H1 (cell line): ENCODE measurements at regions of chr15 and their contacts with region 1.

Region 1: DNA sequence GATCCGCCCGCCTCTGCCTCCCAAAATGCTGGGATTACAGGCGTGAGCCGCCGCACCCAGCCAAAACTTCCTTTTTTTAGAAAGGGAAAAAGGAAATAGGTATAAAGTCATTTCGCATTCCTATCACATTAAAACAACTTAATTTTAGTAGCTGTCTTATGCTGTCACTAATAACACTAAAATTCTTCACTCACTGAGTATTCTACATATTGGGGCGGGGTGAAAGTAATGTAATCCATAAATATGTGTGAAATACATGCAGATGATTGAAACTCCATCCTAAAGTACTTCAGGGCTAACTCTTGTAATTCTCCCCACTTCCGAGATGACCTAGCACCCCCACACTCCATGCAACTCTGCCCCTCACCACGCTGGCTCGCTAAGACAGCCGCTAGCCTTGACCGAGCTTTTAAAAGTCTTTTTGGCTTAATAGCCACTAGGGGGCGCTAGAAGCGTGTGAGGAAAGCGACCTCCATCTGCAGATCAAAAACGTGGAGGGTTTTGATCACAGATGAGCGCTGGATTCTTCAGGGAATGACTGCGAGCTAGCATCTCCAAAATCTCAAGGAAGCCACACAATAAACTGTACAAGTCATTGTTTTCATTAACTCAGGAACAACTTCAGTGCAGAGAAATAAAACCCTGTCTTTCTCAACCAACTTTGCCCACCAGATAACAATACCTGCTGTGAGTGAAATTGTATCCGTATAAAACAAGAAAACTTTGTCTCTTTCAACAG is 129.3 kb upstream of the IGF1R start:
- DNase-seq: peak; percentile 17 to 62
- H3K4me3 ChIP-seq: no peak overlapping the region
- H3K27ac ChIP-seq: no peak overlapping the region
- H3K4me1 ChIP-seq: no peaks in the 10 kb centered on the region; a peak in 1 of 7 replicates
- H3K27me3 ChIP-seq: no peaks in the 10 kb centered on the region
- CTCF ChIP-seq: peak; percentile 47 to 88 (median 81)
- EP300 ChIP-seq: no peak
- POLR2A ChIP-seq: no peak
- RAD21 ChIP-seq: peak; percentile 90 to 94

Region 2: GRCh38 chr15:98568382-98569017 is 49.5 kb after region 1 on chr15:
- CTCF ChIA-PET with region 1: interaction called, 13 read pairs
- POLR2A ChIA-PET with region 1: interaction called, 3 read pairs
- DNase-seq: no peak
- H3K4me3 ChIP-seq: no peak overlapping the region
- H3K27ac ChIP-seq: no peak overlapping the region
- H3K4me1 ChIP-seq: no peaks in the 10 kb centered on the region
- H3K27me3 ChIP-seq: no peaks in the 10 kb centered on the region
- CTCF ChIP-seq: peak in 1 of 3 experiments; percentile 17; a peak in 1 of 4 replicates
- EP300 ChIP-seq: no peak
- POLR2A ChIP-seq: no peak
- RAD21 ChIP-seq: no peak

Region 3: DNA sequence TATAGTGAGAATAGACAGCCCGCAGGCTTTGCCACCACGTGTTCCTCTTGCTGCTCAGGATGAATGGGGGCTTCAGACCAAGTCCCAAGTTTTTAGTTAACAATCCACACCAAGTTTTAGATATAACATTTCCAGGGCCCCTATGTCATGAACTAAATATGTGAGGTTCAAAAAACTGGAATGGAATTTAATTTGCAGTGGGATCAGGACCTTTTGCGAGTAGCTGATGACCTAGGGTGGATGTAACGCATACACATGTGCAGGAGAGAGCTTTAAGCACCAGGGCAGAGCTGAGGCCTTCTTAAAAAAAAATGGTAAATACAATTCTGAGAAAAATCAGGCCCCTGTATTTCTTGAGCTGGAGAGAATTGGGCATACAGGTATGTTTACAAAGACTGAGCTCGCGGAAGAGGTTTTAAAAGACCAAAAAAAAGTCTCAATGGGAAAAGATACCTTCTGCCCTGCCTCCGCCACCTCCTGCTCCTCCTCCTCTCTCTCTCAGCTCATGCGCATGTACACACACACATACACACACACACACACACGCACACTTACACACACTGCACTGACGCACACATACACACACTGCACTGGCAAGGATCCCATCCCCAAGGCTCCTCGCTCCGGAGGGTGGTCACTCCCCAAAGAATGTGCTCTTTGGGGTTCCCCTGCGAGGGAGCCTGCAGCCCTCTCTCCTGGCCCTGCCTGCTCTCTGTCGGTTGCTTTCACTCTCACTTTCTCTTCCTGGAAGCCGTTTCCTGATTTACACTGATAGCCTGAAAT is 81.1 kb after region 1 on chr15:
- CTCF ChIA-PET with region 1: interaction called, 35 read pairs
- POLR2A ChIA-PET with region 1: no interaction called
- DNase-seq: peak in 1 of 2 experiments; percentile 52
- H3K4me3 ChIP-seq: peak overlapping the region in 1 of 4 experiments; percentile 36; a peak in 1 of 8 replicates
- H3K27ac ChIP-seq: no peak overlapping the region
- H3K4me1 ChIP-seq: peaks cover 0 to 14% (median 8%) of the 10 kb centered on the region in 4 experiments; a peak in 5 of 7 replicates
- H3K27me3 ChIP-seq: no peaks in the 10 kb centered on the region
- CTCF ChIP-seq: no peak
- EP300 ChIP-seq: no peak
- POLR2A ChIP-seq: no peak
- RAD21 ChIP-seq: no peak; a peak in 1 of 4 replicates

Region 4: GRCh38 chr15:98658831-98659699 is 140.1 kb after region 1 on chr15:
- CTCF ChIA-PET with region 1: interaction called, 124 read pairs
- POLR2A ChIA-PET with region 1: interaction called, 3 read pairs
- DNase-seq: peak in 1 of 2 experiments; percentile 46
- H3K4me3 ChIP-seq: no peak overlapping the region
- H3K27ac ChIP-seq: no peak overlapping the region
- H3K4me1 ChIP-seq: peaks cover 8 to 31% (median 24%) of the 10 kb centered on the region in 4 experiments
- H3K27me3 ChIP-seq: no peaks in the 10 kb centered on the region
- CTCF ChIP-seq: peak; percentile 42 to 86 (median 72)
- EP300 ChIP-seq: no peak
- POLR2A ChIP-seq: no peak
- RAD21 ChIP-seq: peak; percentile 73 to 80

Region 5: GRCh38 chr15:98904544-98904943 is 385.6 kb after region 1 on chr15:
- CTCF ChIA-PET with region 1: interaction called, 11 read pairs
- POLR2A ChIA-PET with region 1: no interaction called
- DNase-seq: no peak
- H3K4me3 ChIP-seq: no peak overlapping the region
- H3K27ac ChIP-seq: no peak overlapping the region
- H3K4me1 ChIP-seq: peaks cover 6 to 16% (median 14%) of the 10 kb centered on the region in 4 experiments
- H3K27me3 ChIP-seq: no peaks in the 10 kb centered on the region
- CTCF ChIP-seq: peak; percentile 63 to 81 (median 74)
- EP300 ChIP-seq: no peak
- POLR2A ChIP-seq: no peak
- RAD21 ChIP-seq: peak; percentile 85 to 89